ENCODE measurements at regions of chr1 and their contacts with region 1.

Region 1: DNA sequence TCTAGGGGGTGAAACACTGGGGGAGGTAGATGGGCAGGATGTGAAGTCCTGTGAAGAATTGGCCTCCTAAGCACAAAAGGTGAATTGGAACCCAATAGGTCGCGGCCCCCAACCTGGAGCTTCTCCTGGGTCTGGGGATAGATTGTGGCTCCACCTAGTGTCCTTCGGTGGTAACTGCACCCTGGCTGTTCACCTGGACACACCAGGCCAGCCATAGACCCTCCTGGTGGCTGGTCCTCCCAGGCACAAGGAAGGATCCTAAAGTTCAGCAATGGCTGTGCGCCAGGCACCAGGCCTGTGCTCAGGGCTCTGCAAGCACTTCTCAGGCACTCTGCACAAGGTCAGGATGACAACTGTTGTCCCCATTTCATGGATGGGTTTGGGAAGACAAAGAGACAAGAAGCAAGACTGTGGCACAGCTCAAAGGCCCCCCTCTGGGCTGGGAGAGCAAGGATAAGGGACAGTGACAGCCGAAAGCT is 13.5 kb downstream of the ESPN start:
- DNase-seq: peak; percentile 56 to 85 (median 66)
- ATAC-seq: peak; percentile 65
- H3K4me3 ChIP-seq: no peak overlapping the region
- H3K4me3 Mint-ChIP-seq: peak overlapping the region; percentile 65
- H3K27ac ChIP-seq: no peak overlapping the region
- H3K27ac Mint-ChIP-seq: no peak overlapping the region
- H3K4me1 ChIP-seq: peaks cover 15% of the 10 kb centered on the region
- H3K4me1 Mint-ChIP-seq: peaks cover 9% of the 10 kb centered on the region
- H3K27me3 ChIP-seq: peaks cover 10 to 11% of the 10 kb centered on the region in 2 experiments
- H3K27me3 Mint-ChIP-seq: peaks cover 28% of the 10 kb centered on the region
- CTCF ChIP-seq: peak; percentile 97

Region 2: GRCh38 chr1:6239950-6240768 is 197.9 kb before region 1 on chr1:
- CTCF ChIA-PET with region 1: no interaction called
- POLR2A ChIA-PET with region 1: no interaction called
- intact Hi-C with region 1: no loop called
- DNase-seq: no peak
- ATAC-seq: no peak
- H3K4me3 ChIP-seq: no peak overlapping the region
- H3K4me3 Mint-ChIP-seq: no peak overlapping the region
- H3K27ac ChIP-seq: no peak overlapping the region
- H3K27ac Mint-ChIP-seq: no peak overlapping the region
- H3K4me1 ChIP-seq: peaks cover 21% of the 10 kb centered on the region
- H3K4me1 Mint-ChIP-seq: peaks cover 9% of the 10 kb centered on the region
- H3K27me3 ChIP-seq: peaks cover 41 to 48% of the 10 kb centered on the region in 2 experiments
- H3K27me3 Mint-ChIP-seq: peaks cover 49% of the 10 kb centered on the region
- CTCF ChIP-seq: no peak

Region 3: GRCh38 chr1:6454856-6455751 is 17.0 kb after region 1 on chr1:
- CTCF ChIA-PET with region 1: interaction called, 22 read pairs
- POLR2A ChIA-PET with region 1: interaction called, 12 read pairs
- intact Hi-C with region 1: no loop called
- DNase-seq: peak in 10 of 14 experiments; percentile 36 to 82 (median 54)
- ATAC-seq: peak; percentile 21
- H3K4me3 ChIP-seq: no peak overlapping the region
- H3K4me3 Mint-ChIP-seq: no peak overlapping the region
- H3K27ac ChIP-seq: no peak overlapping the region
- H3K27ac Mint-ChIP-seq: no peak overlapping the region
- H3K4me1 ChIP-seq: peaks cover 30% of the 10 kb centered on the region
- H3K4me1 Mint-ChIP-seq: peaks cover 36% of the 10 kb centered on the region
- H3K27me3 ChIP-seq: peaks cover 10 to 16% of the 10 kb centered on the region in 2 experiments
- H3K27me3 Mint-ChIP-seq: peaks cover 30% of the 10 kb centered on the region
- CTCF ChIP-seq: no peak

Region 4: GRCh38 chr1:6801966-6802365 is 363.9 kb after region 1 on chr1:
- CTCF ChIA-PET with region 1: no interaction called
- POLR2A ChIA-PET with region 1: no interaction called
- intact Hi-C with region 1: no loop called
- DNase-seq: no peak
- ATAC-seq: no peak
- H3K4me3 ChIP-seq: no peak overlapping the region
- H3K4me3 Mint-ChIP-seq: no peak overlapping the region
- H3K27ac ChIP-seq: no peak overlapping the region
- H3K27ac Mint-ChIP-seq: no peak overlapping the region
- H3K4me1 ChIP-seq: peaks cover 7% of the 10 kb centered on the region
- H3K4me1 Mint-ChIP-seq: peaks cover 36% of the 10 kb centered on the region
- H3K27me3 ChIP-seq: no peaks in the 10 kb centered on the region
- H3K27me3 Mint-ChIP-seq: no peaks in the 10 kb centered on the region
- CTCF ChIP-seq: no peak

Measured in CD4-positive, alpha-beta T cell (primary cell).